AG04450 (cell line): ENCODE measurements at regions of chr1 and their contacts with region 1.

Region 1: GRCh38 chr1:197572169-197572568 is 203.1 kb downstream of the DENND1B start:
- DNase-seq: no peak
- H3K4me3 ChIP-seq: no peak overlapping the region
- H3K27ac ChIP-seq: no peak overlapping the region
- H3K27me3 ChIP-seq: no peaks in the 10 kb centered on the region
- CTCF ChIP-seq: no peak

Region 2: GRCh38 chr1:197779921-197780320 is 207.8 kb after region 1 on chr1:
- CTCF ChIA-PET with region 1: interaction called, 10 read pairs
- POLR2A ChIA-PET with region 1: no interaction called
- DNase-seq: no peak
- H3K4me3 ChIP-seq: no peak overlapping the region
- H3K27ac ChIP-seq: no peak overlapping the region
- H3K27me3 ChIP-seq: no peaks in the 10 kb centered on the region
- CTCF ChIP-seq: no peak